ENCODE measurements at regions of chr12 and their contacts with region 1.

Region 1: GRCh38 chr12:94101738-94102660 is 46.4 kb upstream of the PLXNC1 start:
- ATAC-seq: peak; percentile 74 to 88 (median 81)
- H3K4me3 ChIP-seq: peak overlapping the region; percentile 36 to 50 (median 46)
- H3K27ac ChIP-seq: no peak overlapping the region
- H3K4me1 ChIP-seq: peaks cover 0 to 2% of the 10 kb centered on the region in 2 donors

Region 2: DNA sequence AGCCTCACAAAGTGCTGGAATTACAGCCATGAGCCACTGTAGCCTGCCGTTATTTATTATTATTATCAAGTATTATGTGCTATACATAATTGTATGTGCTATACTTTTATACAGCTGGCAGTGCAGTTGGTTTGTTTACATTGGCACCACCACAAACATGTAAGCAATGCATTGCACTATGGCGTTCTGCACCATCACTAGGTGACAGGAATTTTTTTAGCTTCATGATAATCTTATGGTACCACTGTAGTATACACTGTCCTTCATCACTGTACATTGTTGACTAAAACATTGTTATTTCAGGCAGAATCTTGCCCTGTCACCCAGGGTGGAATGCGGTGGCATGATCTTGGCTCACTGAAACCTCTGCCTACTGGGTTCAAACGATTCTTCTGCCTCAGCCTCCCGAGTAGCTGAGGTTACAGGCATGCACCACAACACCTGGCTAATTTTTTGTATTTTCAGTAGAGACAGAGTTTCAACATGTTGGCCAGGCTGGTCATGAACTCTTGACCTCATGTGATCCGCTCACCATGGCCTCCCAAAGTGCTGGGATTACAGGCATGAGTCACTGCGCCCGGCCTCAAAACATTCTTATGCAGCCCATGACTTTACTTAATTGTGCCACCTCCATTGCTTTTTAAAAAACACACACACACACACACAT is 617.6 kb before region 1 on chr12:
- in situ Hi-C with region 1: loop called in 1 of 9 experiments (anchors 25 kb)
- ATAC-seq: peak in 2 of 8 experiments; percentile 26 to 41
- H3K4me3 ChIP-seq: no peak overlapping the region
- H3K27ac ChIP-seq: no peak overlapping the region
- H3K4me1 ChIP-seq: no peaks in the 10 kb centered on the region

Region 3: GRCh38 chr12:93502802-93503623 is 599.0 kb before region 1 on chr12:
- in situ Hi-C with region 1: loop called in 3 of 9 experiments (anchors 10 to 25 kb)
- ATAC-seq: peak in 1 of 8 experiments; percentile 19
- H3K4me3 ChIP-seq: no peak overlapping the region
- H3K27ac ChIP-seq: no peak overlapping the region
- H3K4me1 ChIP-seq: no peaks in the 10 kb centered on the region

Region 4: DNA sequence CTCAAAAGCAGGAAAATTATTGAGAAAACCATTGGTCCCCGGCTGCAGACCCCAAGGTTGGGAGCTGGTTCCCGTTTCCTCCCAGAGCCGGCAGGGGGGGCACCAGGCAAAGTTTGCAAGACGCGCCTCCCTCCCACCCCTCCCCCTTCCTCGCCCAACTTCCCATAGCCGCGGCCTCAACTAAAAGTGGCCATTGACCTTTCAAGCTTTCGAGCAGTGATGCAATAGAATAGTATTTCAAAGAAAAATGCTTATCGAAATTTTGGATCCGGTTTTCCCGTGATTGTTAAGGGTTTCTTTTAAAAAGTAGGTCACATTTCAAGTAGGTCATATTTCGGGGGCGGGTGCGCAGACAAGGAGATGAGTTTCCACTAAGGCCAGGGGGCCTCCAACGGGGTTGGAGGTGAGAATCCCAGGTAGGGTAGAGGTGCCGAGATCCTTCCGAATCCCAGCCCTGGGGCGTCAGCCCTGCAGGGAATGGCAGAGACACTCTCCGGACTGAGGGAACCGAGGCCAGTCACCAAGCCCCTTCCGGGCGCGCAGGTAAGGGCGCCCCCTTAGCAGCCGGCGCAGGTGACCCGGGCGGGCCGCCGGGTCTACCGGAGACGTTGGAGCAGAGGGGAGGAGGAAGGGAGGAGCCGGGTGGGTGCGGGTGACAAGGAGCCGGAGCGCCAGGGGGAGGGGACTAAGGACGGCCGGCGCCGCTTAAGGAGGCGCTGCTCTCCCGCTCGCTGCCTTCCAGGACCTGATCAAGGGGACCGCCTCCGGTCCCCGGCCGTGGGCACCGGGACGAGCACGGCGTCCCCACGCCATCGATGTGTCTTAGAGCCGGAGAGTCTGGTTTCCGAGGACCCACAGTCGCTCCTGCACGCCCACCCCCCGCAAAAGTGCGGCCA is 532.1 kb before region 1 on chr12:
- in situ Hi-C with region 1: loop called in 7 of 9 experiments (anchors 10 to 25 kb)
- ATAC-seq: peak; percentile 40 to 67 (median 62)
- H3K4me3 ChIP-seq: peak overlapping the region; percentile 54 to 87 (median 58)
- H3K27ac ChIP-seq: peak overlapping the region; percentile 26 to 69
- H3K4me1 ChIP-seq: peaks cover 0 to 11% of the 10 kb centered on the region in 2 donors

Region 5: GRCh38 chr12:94289461-94290312 is 187.7 kb after region 1 on chr12:
- in situ Hi-C with region 1: no loop called
- ATAC-seq: peak in 7 of 8 experiments; percentile 36 to 69 (median 58)
- H3K4me3 ChIP-seq: no peak overlapping the region
- H3K27ac ChIP-seq: no peak overlapping the region
- H3K4me1 ChIP-seq: peaks cover 36 to 42% of the 10 kb centered on the region in 2 donors

Region 6: DNA sequence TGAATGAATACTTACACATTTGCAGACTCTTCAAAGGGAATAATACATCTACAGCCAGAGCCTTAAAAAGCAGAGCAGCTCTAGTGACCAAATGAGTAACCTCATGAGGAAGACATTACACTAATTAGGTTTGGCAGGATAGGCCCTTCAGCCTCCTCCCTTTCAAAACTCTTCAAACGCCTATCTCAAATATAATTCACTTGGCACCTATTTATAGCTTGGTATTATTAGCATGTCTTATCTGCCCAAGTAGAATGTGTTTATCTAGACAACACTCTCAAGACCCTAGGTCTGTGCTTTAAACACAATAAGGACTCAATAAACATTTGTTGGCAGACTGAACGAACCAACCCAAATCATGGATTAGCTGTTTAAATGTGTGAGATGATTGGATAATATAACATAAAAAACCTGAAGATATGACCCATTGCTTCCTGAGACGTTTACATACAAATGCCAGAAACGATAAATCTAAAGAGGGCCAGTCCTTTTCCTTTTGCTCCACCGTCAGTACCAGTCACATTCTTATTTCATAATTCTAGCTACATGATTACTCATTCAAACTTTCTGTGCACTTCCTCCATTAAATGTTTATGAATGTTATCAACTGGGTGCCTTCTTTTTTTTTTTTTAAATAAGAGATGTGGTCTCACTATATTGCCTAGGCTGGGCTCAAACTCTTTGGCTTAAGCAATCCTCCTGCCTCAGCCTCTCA is 234.4 kb after region 1 on chr12:
- in situ Hi-C with region 1: no loop called
- ATAC-seq: no peak
- H3K4me3 ChIP-seq: no peak overlapping the region
- H3K27ac ChIP-seq: no peak overlapping the region
- H3K4me1 ChIP-seq: no peaks in the 10 kb centered on the region

Measured in motor neuron (in vitro differentiated cells).